ENCODE measurements at regions of chr2 and their contacts with region 1.

Region 1: GRCh38 chr2:68467077-68467960 is at the starts of genes APLF and FBXO48:
- DNase-seq: peak; percentile 99
- H3K4me3 Mint-ChIP-seq: peak within 1 kb of the TSS; percentile 94
- H3K27ac Mint-ChIP-seq: peak within 1 kb of the TSS; percentile 93
- H3K4me1 Mint-ChIP-seq: peaks cover 40% of the 10 kb centered on the region
- H3K27me3 Mint-ChIP-seq: no peaks in the 10 kb centered on the region
- total RNA-seq, gene APLF: 2.4 to 2.7 TPM
- total RNA-seq, gene FBXO48: 1.1 to 1.2 TPM

Region 2: DNA sequence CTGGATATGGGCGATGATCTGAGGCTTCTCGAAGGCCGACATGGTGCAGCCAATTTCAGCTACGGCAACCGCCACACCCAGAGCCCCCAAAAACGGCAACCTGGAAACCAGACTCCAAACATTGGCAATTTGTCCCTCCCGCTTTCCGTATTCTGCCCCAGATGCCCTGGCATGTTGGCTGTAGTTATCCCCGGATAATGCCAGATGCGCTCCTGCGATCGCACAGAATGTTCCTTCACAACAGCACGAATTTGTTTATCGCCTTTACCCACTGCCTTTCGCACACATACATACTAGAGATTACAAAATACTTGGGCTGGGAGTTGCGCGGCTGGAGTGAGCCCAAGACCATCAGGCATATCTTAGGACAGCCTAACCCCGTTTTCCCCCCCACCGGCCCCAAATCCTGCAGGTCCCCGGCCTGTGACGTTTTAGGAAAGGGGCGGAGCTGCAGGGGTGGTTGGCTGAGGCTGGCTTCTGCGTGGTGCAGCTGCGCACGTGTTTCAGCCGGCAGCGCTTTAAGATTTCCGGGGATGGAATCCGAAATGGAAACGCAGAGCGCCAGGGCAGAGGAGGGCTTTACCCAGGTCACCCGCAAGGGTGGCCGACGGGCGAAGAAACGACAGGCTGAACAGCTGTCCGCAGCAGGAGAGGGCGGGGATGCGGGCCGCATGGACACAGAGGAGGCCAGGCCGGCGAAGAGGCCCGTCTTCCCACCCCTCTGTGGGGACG is 309.8 kb before region 1 on chr2 and contains the start of gene PNO1:
- CTCF ChIA-PET with region 1: no interaction called
- intact Hi-C with region 1: loop called (anchors 1 kb)
- DNase-seq: peak; percentile 98
- H3K4me3 Mint-ChIP-seq: peak within 1 kb of the TSS; percentile 91
- H3K27ac Mint-ChIP-seq: peak within 1 kb of the TSS; percentile 99
- H3K4me1 Mint-ChIP-seq: peaks cover 54% of the 10 kb centered on the region
- H3K27me3 Mint-ChIP-seq: no peaks in the 10 kb centered on the region
- total RNA-seq, gene PNO1: 14.5 to 14.6 TPM

Region 3: GRCh38 chr2:68336192-68336591 is 131.1 kb before region 1 on chr2:
- CTCF ChIA-PET with region 1: no interaction called
- intact Hi-C with region 1: no loop called
- DNase-seq: no peak
- H3K4me3 Mint-ChIP-seq: no peak overlapping the region
- H3K27ac Mint-ChIP-seq: no peak overlapping the region
- H3K4me1 Mint-ChIP-seq: no peaks in the 10 kb centered on the region
- H3K27me3 Mint-ChIP-seq: peaks cover 17% of the 10 kb centered on the region

Region 4: GRCh38 chr2:68441179-68441993 is 25.9 kb before region 1 on chr2:
- CTCF ChIA-PET with region 1: interaction called, 10 read pairs
- intact Hi-C with region 1: no loop called
- DNase-seq: peak; percentile 92
- H3K4me3 Mint-ChIP-seq: no peak overlapping the region
- H3K27ac Mint-ChIP-seq: peak overlapping the region; percentile 28
- H3K4me1 Mint-ChIP-seq: peaks cover 15% of the 10 kb centered on the region
- H3K27me3 Mint-ChIP-seq: peaks cover 2% of the 10 kb centered on the region

Region 5: GRCh38 chr2:68499133-68499532 is 31.8 kb after region 1 on chr2:
- CTCF ChIA-PET with region 1: no interaction called
- intact Hi-C with region 1: no loop called
- DNase-seq: no peak
- H3K4me3 Mint-ChIP-seq: no peak overlapping the region
- H3K27ac Mint-ChIP-seq: no peak overlapping the region
- H3K4me1 Mint-ChIP-seq: no peaks in the 10 kb centered on the region
- H3K27me3 Mint-ChIP-seq: no peaks in the 10 kb centered on the region

Region 6: DNA sequence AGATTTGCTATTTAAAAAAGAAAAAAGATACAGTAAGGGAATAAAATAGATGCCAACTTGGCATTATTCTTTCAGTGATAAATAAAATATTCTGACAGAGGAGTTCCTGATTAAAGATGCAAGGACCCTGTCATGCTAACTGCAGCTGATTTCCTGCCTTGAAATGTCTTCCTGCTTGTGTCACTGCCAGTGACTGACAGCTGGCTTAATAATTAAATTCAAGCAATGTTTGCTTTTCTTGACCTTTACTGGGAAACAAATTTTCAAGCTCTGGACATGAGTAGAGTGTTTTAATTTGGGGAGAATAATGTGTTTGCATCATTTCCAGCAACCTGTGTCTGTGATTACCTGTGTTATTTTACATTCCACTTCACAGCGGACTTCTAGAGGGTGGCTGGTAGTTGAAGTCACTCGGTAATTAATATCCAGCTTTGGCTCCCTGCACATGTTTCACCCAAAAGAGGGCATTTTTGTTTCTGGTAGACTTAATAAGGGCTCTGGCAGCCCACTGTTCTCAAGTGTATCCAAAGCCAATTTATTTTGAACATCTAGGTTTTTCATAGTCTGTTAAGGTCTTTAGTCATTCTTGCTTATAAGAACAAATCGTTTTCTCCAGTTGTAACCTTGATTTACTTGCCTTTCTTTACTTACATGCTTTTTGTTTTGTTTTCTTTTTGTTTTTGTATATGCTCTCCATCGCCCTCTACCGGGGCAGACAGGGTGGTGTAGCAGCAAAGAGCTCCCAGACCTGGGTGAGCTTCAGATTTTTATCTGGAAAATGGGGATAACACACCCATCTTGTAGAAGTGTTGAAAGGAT is 127.6 kb after region 1 on chr2:
- CTCF ChIA-PET with region 1: interaction called, 52 read pairs
- intact Hi-C with region 1: loop called (anchors 1 kb)
- DNase-seq: peak; percentile 63
- H3K4me3 Mint-ChIP-seq: no peak overlapping the region
- H3K27ac Mint-ChIP-seq: no peak overlapping the region
- H3K4me1 Mint-ChIP-seq: peaks cover 3% of the 10 kb centered on the region
- H3K27me3 Mint-ChIP-seq: peaks cover 13% of the 10 kb centered on the region

Region 7: GRCh38 chr2:68709421-68709911 is 242.1 kb after region 1 on chr2:
- CTCF ChIA-PET with region 1: interaction called, 29 read pairs
- intact Hi-C with region 1: no loop called
- DNase-seq: peak; percentile 34
- H3K4me3 Mint-ChIP-seq: no peak overlapping the region
- H3K27ac Mint-ChIP-seq: no peak overlapping the region
- H3K4me1 Mint-ChIP-seq: peaks cover 20% of the 10 kb centered on the region
- H3K27me3 Mint-ChIP-seq: no peaks in the 10 kb centered on the region

Region 8: GRCh38 chr2:68796294-68796905 is 329.1 kb after region 1 on chr2:
- CTCF ChIA-PET with region 1: no interaction called
- intact Hi-C with region 1: loop called (anchors 1 kb)
- DNase-seq: peak; percentile 34
- H3K4me3 Mint-ChIP-seq: no peak overlapping the region
- H3K27ac Mint-ChIP-seq: peak overlapping the region; percentile 74
- H3K4me1 Mint-ChIP-seq: peaks cover 76% of the 10 kb centered on the region
- H3K27me3 Mint-ChIP-seq: no peaks in the 10 kb centered on the region

Region 9: DNA sequence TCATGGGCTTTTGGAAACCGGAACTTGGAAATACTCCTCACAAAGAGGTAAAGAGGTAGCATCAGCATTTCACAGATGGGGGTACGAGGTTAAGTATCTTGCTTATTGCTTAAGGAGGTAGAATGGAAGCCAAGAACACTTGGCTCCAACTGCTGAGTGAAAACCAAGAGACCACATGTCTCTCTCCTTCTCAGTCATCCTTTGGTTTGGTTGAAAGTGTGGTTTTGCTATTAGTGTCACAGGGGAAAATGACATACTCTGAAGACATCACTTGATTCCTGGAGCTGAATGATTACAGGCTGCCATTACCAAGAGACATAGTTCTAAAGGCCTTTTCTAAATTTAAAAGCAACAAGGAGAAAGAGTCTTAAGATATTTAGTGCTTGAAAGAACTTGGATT is 587.1 kb after region 1 on chr2:
- CTCF ChIA-PET with region 1: no interaction called
- intact Hi-C with region 1: loop called (anchors 1 kb)
- DNase-seq: peak; percentile 30
- H3K4me3 Mint-ChIP-seq: no peak overlapping the region
- H3K27ac Mint-ChIP-seq: no peak overlapping the region
- H3K4me1 Mint-ChIP-seq: peaks cover 7% of the 10 kb centered on the region
- H3K27me3 Mint-ChIP-seq: peaks cover 39% of the 10 kb centered on the region